Common myeloid progenitor, CD34-positive (primary cell): ENCODE measurements at regions of chr2 and their contacts with region 1.

Region 1: GRCh38 chr2:46119453-46119852 is 177.8 kb upstream of the EPAS1 start:
- DNase-seq: no peak
- H3K4me3 ChIP-seq: no peak overlapping the region
- H3K27ac ChIP-seq: no peak overlapping the region
- H3K4me1 ChIP-seq: peaks cover 0 to 12% (median 0%) of the 10 kb centered on the region in 4 experiments
- H3K27me3 ChIP-seq: no peaks in the 10 kb centered on the region

Region 2: DNA sequence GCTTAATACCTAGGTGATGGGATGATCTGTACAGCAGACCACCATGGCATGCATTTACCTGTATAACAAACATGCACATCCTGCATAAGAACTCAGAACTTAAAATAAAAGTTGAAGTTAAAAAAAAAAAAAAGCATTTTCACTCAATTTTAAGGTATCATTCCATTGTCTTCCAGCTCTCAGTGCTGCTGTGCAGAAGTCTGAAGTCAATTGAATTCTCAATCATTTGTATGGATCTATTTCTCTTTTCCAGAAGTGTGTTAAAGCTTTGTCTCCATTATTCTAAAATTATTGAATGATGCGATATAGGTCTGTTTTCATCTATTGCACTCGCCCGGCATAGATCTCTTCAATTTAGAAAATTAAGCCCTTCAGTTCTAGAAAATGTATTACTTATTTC is 24.8 kb before region 1 on chr2:
- CTCF ChIA-PET with region 1: no interaction called
- POLR2A ChIA-PET with region 1: interaction called, 12 read pairs
- DNase-seq: peak in 1 of 3 donors; percentile 22
- H3K4me3 ChIP-seq: no peak overlapping the region
- H3K27ac ChIP-seq: no peak overlapping the region
- H3K4me1 ChIP-seq: peaks cover 0 to 8% (median 0%) of the 10 kb centered on the region in 4 experiments
- H3K27me3 ChIP-seq: no peaks in the 10 kb centered on the region

Region 3: DNA sequence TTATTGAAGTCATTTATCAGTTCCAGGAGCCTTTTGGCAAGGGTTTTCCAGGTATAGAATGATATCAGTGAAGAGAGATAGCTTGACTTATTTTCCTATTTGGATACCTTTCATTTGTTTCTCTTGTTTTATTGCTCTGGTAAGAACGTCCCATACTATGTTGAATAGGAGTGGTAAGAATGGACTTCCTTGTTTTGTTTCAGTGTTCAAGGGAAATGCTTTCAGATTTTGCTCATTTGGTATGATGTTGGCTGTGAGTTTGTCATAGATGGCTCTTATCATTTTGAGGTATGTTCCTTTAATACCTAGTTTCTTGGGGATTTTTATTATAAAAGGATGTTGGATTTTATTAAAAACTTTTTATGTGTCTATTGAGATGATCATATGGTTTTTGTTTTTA is 90.6 kb after region 1 on chr2:
- CTCF ChIA-PET with region 1: no interaction called
- POLR2A ChIA-PET with region 1: no interaction called
- DNase-seq: no peak
- H3K4me3 ChIP-seq: no peak overlapping the region
- H3K27ac ChIP-seq: no peak overlapping the region
- H3K4me1 ChIP-seq: peaks cover 0 to 7% (median under 1%) of the 10 kb centered on the region in 4 experiments
- H3K27me3 ChIP-seq: no peaks in the 10 kb centered on the region